Right lobe of liver (tissue), 6 donors: ENCODE measurements at regions of chr22 and their contacts with region 1.

Region 1: DNA sequence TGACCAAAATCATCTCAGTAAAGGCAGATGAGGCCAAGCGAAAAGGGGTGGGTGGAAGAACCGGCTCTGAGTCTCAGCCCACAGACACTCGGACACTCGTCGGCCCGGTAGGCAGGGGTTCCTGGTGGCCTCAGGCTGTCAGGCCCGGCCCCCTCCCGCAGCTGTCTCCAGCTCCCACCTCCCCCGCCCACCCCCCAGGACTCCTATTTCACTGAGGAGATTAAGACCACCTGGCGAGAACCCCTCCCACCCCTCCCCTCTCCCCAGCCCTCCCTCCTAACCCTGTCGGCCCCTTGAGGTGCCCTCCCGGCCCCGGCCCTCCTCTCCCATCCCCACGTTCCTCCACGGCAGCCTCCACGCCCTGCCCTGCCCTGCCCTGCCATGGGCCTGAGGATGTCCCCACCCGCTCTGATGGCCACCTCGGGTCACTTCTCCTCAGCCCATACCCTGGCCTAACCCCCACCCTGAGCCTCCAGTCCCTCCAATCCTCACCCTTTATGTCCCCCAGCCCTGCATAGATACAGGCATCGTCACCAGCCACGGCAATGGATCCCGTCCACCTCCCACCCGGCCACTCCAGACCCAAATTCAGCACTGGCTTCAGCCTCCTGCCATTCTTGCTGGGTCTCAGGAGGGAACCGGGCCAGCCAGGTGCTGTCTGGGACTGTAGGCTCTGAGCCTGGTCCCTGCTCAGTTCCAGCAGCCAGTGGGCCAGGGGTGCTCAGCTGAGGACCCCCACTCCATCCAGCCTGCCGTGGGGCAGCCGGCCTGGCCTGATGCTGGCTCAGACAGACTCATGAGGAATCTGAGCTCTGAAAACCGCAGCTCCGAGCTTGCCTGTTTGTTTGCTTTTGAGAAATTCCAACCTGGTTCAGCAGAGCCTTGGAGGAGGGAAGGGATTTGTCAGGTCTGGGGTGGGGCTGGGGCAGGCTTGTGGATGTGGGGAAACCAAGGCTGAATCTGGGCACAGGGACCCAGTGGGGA is 9.8 kb upstream of the TBX1 start:
- DNase-seq: no peak
- ATAC-seq: no peak
- H3K4me3 ChIP-seq: no peak overlapping the region
- H3K27ac ChIP-seq: no peak overlapping the region
- H3K4me1 ChIP-seq: no peaks in the 10 kb centered on the region
- H3K27me3 ChIP-seq: peaks cover 0 to 5% of the 10 kb centered on the region in 2 donors
- CTCF ChIP-seq: no peak
- POLR2A ChIP-seq: no peak

Region 2: GRCh38 chr22:19896665-19897355 is 146.0 kb after region 1 on chr22:
- intact Hi-C with region 1: loop called in 1 of 2 experiments (anchors 5 kb)
- DNase-seq: no peak
- ATAC-seq: no peak
- H3K4me3 ChIP-seq: no peak overlapping the region
- H3K27ac ChIP-seq: no peak overlapping the region
- H3K4me1 ChIP-seq: peaks cover 0 to 4% (median 0%) of the 10 kb centered on the region in 4 donors
- H3K27me3 ChIP-seq: no peaks in the 10 kb centered on the region
- CTCF ChIP-seq: no peak
- POLR2A ChIP-seq: no peak